ENCODE measurements at regions of chr1 and their contacts with region 1.

Region 1: GRCh38 chr1:39408641-39409054 is 82.8 kb upstream of the BMP8A start:
- DNase-seq: peak; percentile 99
- H3K4me3 ChIP-seq: peak overlapping the region; percentile 84 to 87
- H3K27ac ChIP-seq: peak overlapping the region; percentile 86 to 91
- H3K4me1 ChIP-seq: peaks cover 35 to 42% of the 10 kb centered on the region in 2 experiments
- H3K27me3 ChIP-seq: no peaks in the 10 kb centered on the region
- CTCF ChIP-seq: no peak
- EP300 ChIP-seq: no peak
- RAD21 ChIP-seq: no peak

Region 2: DNA sequence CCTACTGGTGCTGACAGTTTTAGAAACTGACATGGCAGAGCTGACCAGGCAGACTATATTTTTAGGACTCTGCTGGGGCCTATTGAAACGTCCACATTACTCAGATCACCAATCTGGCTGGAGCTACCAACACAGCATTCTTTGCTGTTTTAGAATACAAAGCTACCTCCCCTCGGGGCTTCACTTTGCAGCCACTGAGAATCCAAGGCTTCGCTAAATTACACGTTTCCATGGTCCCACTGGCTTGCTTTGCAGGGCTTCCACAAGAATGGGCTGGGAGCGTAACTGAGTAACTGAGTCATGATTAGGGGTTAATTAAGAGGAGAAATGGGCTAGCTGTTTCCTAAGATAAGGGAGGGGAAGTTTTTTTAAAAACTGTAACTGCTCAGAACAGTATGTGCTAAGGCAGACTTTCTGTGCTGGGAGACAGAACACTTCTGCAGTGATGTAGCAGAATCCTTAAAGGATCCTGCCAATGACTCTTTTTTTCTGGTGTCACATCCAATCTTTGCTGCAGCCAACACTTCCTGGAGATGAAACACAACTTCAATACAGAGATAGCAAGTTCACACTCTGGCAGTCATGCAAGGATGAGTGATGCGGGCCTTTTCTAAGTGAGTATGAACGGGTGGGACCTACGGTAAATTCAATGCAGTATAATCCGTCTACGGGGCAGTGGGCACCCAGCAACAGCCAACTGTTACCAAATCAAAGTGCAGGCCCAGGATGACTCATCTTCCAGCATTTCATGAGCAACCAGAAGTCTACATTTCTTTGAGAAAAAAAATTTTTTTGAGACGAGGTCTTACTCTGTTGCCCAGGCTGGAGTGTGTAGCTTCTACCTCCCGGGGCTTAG is 361.0 kb before region 1 on chr1:
- CTCF ChIA-PET with region 1: no interaction called
- POLR2A ChIA-PET with region 1: no interaction called
- DNase-seq: no peak
- H3K4me3 ChIP-seq: no peak overlapping the region
- H3K27ac ChIP-seq: peak overlapping the region; percentile 4 to 88; a peak in 2 of 4 replicates
- H3K4me1 ChIP-seq: 0 out of 4 replicates have a peak, but pooled peaks cover 0 to 11% of the 10 kb centered on the region in 2 experiments
- H3K27me3 ChIP-seq: no peaks in the 10 kb centered on the region
- CTCF ChIP-seq: no peak
- EP300 ChIP-seq: no peak; a peak in 1 of 4 replicates
- RAD21 ChIP-seq: no peak

Region 3: DNA sequence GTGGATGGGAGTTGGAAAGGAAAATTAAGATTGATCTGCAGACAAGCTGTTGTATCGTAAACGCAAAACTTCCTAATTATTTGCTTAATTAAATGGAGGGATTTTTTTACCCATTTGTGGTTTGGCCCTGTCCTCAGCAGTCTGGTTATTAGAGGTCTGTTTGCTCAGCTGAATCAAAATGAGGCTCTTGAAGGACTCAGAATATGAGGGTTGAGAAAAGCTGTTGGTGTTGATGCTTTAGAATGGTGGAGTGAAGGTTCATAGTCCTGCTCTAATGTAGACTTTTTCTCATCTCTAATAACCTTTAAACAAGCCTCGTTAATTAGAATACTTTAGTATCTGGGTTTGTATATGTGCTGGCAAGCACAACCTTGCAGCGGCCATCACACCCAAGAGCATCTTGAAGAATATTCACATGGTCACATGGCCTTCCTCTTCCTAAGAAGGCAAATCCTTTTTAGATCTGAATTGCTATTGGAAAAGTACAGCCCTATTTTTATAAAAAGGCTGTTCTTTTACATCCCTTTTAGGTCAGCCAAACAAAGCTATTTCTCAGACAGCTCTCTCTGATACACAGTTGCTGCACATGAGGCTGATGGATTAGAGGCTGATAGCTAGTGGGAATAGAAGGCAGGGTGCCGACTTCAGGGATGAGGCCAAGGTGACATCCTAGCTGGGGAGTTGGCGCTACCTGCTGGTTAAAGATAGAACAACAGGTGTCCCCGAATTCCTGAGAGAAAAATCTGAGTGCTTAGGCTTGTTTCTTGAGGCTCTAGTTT is 150.3 kb before region 1 on chr1:
- CTCF ChIA-PET with region 1: interaction called, 13 read pairs
- POLR2A ChIA-PET with region 1: no interaction called
- DNase-seq: peak; percentile 80
- H3K4me3 ChIP-seq: no peak overlapping the region; a peak in 1 of 4 replicates
- H3K27ac ChIP-seq: peak overlapping the region; percentile 5 to 48; a peak in 1 of 4 replicates
- H3K4me1 ChIP-seq: peaks cover 10 to 11% of the 10 kb centered on the region in 2 experiments
- H3K27me3 ChIP-seq: no peaks in the 10 kb centered on the region
- CTCF ChIP-seq: peak; percentile 86
- EP300 ChIP-seq: no peak
- RAD21 ChIP-seq: peak; percentile 89

Region 4: DNA sequence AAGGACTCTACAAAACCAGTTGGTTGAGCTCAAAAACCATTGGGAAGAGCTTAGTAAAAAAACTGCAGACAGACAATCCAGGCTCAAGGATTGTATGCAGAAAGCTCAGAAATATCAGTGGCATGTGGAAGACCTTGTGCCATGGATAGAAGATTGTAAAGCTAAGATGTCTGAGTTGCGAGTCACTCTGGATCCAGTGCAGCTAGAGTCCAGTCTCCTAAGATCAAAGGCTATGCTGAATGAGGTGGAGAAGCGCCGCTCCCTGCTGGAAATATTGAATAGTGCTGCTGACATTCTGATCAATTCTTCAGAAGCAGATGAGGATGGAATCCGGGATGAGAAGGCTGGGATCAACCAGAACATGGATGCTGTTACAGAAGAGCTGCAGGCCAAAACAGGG is 21.2 kb before region 1 on chr1:
- CTCF ChIA-PET with region 1: interaction called, 12 read pairs
- POLR2A ChIA-PET with region 1: no interaction called
- DNase-seq: no peak
- H3K4me3 ChIP-seq: no peak overlapping the region
- H3K27ac ChIP-seq: peak overlapping the region; percentile 20 to 68; a peak in 2 of 4 replicates
- H3K4me1 ChIP-seq: peaks cover 8 to 29% of the 10 kb centered on the region in 2 experiments
- H3K27me3 ChIP-seq: no peaks in the 10 kb centered on the region
- CTCF ChIP-seq: peak; percentile 63
- EP300 ChIP-seq: peak in 1 of 2 experiments; percentile 15; a peak in 1 of 4 replicates
- RAD21 ChIP-seq: peak; percentile 41

Region 5: GRCh38 chr1:39431927-39432326 is 23.3 kb after region 1 on chr1:
- CTCF ChIA-PET with region 1: interaction called, 18 read pairs
- POLR2A ChIA-PET with region 1: no interaction called
- DNase-seq: no peak
- H3K4me3 ChIP-seq: no peak overlapping the region
- H3K27ac ChIP-seq: no peak overlapping the region
- H3K4me1 ChIP-seq: no peaks in the 10 kb centered on the region; a peak in 1 of 4 replicates
- H3K27me3 ChIP-seq: no peaks in the 10 kb centered on the region
- CTCF ChIP-seq: no peak
- EP300 ChIP-seq: no peak
- RAD21 ChIP-seq: no peak

Measured in SK-N-SH (cell line).